GM18951 (cell line): ENCODE measurements at regions of chr3 and their contacts with region 1.

Region 1: GRCh38 chr3:185976977-185977678 is 39.3 kb upstream of the TRA2B start:
- POLR2A ChIP-seq: no peak

Region 2: GRCh38 chr3:185253645-185254410 is 723.3 kb before region 1 on chr3 and contains the start of gene EHHADH:
- in situ Hi-C with region 1: no loop called
- POLR2A ChIP-seq: peak; percentile 59

Region 3: DNA sequence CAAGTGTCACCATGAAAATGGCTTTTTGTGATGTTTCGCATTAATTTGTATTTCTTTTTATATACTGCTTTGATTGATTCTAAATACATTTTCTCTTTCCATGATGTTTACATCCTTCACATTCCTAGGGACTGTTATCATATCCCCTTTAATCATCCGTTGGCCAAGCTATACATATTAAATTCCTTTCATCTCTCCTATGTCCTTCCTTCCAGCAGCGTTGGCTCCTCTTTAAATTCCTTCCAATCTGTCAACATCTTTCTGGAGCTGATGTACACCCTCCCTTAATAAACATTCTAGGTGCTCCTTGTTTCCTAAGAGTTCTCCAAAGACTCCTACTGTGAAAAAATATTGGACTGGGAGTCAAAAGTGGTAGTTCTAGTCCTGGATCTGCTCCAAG is 240.1 kb before region 1 on chr3:
- in situ Hi-C with region 1: no loop called
- POLR2A ChIP-seq: no peak

Region 4: DNA sequence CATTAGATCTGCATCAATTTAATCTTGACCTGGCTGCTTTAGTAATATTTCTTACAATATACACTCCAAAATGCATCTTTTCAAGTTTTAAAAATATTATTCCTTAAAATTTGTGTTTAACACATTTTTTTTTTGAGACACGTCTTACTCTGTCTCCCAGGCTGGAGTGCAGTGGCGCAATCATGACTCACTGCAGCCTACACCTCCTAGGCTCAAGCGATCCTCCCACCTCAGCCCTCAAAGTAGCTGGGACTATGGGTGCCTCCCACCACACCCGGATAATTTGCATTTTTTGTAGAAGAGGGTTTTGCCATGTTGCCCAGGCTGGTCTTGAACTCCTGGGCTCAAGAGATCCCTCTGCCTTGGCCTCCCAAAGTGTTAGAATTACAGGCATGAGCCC is 58.1 kb after region 1 on chr3:
- in situ Hi-C with region 1: no loop called
- POLR2A ChIP-seq: no peak

Region 5: DNA sequence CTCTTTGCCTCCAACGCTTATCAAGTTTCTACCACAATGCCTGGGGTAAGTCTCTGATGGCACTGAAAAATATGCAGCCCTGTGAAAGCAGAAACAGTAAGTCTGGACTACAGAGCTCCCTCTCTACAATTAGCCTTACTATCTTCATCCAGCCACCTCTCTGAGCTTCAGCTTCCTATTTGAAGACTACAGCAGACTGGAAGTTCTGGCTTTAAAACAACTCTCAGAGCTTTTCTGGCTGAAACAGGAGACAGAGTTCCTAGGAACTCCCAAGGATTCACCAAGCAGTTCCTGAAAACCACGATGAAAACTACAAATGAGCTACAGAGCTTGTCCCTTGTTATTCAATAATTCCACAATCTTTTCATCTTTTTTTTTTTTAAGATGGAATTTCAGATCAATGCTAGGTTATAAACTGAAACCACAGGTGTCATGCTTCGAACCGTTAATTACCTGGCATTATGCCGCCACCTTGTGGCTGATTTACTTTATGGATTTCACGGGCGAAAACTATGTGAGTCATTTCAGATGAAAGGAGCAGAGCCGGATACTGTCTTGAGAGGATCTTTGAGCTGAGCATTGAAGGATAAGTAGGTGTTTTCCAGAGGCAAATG is 563.2 kb after region 1 on chr3:
- in situ Hi-C with region 1: loop called (anchors 10 kb)
- POLR2A ChIP-seq: no peak